Activated CD4-positive, alpha-beta memory T cell treated with anti-CD3 and anti-CD28 coated beads for 36 hours (primary cell): ENCODE measurements at regions of chr10 and their contacts with region 1.

Region 1: DNA sequence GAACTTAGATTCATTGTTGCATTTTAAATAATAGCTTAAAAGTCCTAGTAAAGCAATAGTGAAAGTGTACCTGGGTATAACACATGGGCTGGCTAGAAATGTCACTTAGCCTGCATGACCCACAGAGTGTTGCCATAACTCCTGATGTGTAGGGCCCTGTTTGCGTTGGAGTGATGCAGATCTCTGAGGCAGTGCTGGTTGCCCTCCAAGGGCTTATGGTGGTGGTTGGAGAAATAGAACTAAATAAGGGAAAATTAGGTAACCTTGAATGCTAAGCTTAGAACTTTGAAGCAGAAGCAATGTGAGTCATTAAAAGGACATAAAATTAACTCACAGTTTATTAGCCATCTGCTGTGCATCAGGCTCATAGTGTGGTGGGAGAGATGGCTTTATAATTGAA is 105.7 kb downstream of the CCNY start:
- DNase-seq: peak; percentile 43
- H3K4me3 Mint-ChIP-seq: peak overlapping the region; percentile 16
- H3K27ac Mint-ChIP-seq: peak overlapping the region; percentile 87
- H3K4me1 Mint-ChIP-seq: peaks cover 48% of the 10 kb centered on the region
- H3K27me3 Mint-ChIP-seq: no peaks in the 10 kb centered on the region

Region 2: GRCh38 chr10:35328404-35329037 is 113.5 kb before region 1 on chr10:
- CTCF ChIA-PET with region 1: no interaction called
- POLR2A ChIA-PET with region 1: no interaction called
- intact Hi-C with region 1: loop called (anchors 1 kb)
- DNase-seq: no peak
- H3K4me3 Mint-ChIP-seq: no peak overlapping the region
- H3K27ac Mint-ChIP-seq: peak overlapping the region; percentile 51
- H3K4me1 Mint-ChIP-seq: peaks cover 47% of the 10 kb centered on the region
- H3K27me3 Mint-ChIP-seq: no peaks in the 10 kb centered on the region

Region 3: DNA sequence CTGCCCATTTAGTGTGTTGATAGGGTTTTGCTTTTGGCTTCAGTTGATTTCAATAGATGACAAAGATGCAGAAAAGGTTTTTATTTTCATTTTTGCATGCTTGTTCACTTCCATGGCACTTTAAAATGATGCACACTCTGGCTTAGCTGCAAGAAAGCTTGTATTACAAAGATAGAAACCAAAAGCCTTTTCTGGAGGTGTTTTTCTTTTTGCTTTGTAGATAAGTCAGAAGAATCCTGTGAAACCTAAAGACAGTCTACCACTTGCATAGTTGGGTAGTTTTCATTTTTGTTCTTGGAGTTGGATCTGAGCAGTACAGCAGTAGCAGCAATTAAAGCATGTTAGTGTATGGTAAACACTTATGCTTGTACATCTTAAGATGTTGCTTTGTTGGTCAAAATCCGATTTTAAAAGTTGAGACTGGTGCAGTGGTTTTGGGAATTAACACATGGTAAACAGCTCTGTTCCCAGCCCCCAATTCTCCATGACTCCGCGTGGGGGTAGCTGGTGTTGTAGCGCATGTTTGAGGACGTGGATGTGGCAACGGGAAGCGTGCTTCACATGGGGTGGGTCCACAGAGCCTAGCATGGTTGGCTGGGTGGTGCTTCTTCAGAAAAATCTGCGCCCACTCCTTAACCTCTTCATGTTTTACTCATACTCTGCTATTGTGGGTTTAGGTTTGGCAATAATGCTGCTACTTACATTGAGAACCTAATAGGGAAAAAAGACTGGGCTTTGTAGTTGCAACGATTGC is 85.9 kb before region 1 on chr10:
- CTCF ChIA-PET with region 1: no interaction called
- POLR2A ChIA-PET with region 1: interaction called, 10 read pairs
- intact Hi-C with region 1: loop called (anchors 1 kb)
- DNase-seq: peak; percentile 69
- H3K4me3 Mint-ChIP-seq: peak overlapping the region; percentile 63
- H3K27ac Mint-ChIP-seq: peak overlapping the region; percentile 94
- H3K4me1 Mint-ChIP-seq: peaks cover 77% of the 10 kb centered on the region
- H3K27me3 Mint-ChIP-seq: no peaks in the 10 kb centered on the region

Region 4: DNA sequence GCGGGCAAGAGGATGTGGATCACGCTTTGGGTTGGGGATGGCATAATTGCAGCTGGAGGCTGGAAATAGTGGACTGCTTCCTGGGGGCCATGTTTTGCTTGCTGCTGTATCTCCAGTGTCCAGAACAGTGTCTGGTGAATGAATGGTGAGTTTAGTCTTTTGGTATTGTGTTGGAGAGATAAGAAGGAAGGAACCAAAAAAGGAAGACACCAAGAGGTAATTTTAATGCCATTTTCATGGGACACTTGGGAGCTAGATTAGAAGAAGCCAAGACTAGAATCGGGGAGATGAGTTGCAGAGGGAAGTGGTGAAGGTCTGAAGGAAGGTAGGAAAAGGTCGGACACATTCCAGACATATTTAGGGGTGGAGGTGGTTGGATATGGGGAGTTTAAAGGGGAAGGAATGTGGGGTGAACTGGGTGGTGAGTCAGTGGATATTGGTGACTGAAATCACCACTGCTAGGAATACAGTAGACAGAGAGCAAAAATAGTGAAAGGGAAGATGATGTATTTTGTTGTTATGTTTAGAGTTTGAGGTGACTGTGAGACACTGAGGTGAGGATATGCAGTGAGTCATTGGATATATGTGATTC is 29.0 kb before region 1 on chr10:
- CTCF ChIA-PET with region 1: no interaction called
- POLR2A ChIA-PET with region 1: no interaction called
- intact Hi-C with region 1: loop called (anchors 2 kb)
- DNase-seq: no peak
- H3K4me3 Mint-ChIP-seq: no peak overlapping the region
- H3K27ac Mint-ChIP-seq: no peak overlapping the region
- H3K4me1 Mint-ChIP-seq: peaks cover 44% of the 10 kb centered on the region
- H3K27me3 Mint-ChIP-seq: no peaks in the 10 kb centered on the region